PC-9 (cell line): ENCODE measurements at regions of chr6 and their contacts with region 1.

Region 1: DNA sequence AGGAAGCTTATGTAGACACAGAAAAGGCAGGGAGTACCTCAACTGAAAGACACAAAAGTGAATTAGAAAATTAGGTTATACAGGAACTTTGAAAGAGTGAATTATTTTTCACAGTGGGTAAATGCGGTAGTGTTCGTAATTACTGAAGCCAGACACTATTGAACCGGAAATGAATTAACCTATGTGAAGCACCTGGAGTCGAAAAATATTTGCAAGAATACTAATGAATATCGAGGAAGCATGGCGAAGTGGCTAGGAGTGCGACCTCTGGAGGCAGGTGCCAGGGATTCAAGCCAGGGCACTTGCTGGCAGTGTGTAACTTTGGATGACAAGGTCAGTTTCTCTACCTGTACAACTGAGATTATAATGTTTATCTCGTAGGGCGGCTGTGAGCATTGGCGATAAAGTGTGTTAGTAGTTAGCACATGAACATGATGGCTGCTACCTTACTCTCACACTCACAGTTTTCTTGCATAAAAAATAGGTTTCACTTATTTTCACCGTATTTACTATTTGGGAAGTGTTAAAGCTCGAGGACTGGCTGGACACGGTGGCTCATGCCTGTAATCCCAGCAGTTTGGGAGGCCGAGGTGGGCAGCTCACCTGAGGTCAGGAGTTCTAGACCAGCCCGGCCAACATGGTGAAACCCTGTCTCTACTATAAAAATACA is 567 bp upstream of the SLC18B1 start:
- DNase-seq: peak; percentile 78 to 85
- H3K4me3 ChIP-seq: no peak overlapping the region; the same call in 1 of the 2 replicates
- H3K27ac ChIP-seq: no peak overlapping the region
- H3K4me1 ChIP-seq: peaks cover 7% of the 10 kb centered on the region
- H3K27me3 ChIP-seq: no peaks in the 10 kb centered on the region
- CTCF ChIP-seq: peak; percentile 91

Region 2: DNA sequence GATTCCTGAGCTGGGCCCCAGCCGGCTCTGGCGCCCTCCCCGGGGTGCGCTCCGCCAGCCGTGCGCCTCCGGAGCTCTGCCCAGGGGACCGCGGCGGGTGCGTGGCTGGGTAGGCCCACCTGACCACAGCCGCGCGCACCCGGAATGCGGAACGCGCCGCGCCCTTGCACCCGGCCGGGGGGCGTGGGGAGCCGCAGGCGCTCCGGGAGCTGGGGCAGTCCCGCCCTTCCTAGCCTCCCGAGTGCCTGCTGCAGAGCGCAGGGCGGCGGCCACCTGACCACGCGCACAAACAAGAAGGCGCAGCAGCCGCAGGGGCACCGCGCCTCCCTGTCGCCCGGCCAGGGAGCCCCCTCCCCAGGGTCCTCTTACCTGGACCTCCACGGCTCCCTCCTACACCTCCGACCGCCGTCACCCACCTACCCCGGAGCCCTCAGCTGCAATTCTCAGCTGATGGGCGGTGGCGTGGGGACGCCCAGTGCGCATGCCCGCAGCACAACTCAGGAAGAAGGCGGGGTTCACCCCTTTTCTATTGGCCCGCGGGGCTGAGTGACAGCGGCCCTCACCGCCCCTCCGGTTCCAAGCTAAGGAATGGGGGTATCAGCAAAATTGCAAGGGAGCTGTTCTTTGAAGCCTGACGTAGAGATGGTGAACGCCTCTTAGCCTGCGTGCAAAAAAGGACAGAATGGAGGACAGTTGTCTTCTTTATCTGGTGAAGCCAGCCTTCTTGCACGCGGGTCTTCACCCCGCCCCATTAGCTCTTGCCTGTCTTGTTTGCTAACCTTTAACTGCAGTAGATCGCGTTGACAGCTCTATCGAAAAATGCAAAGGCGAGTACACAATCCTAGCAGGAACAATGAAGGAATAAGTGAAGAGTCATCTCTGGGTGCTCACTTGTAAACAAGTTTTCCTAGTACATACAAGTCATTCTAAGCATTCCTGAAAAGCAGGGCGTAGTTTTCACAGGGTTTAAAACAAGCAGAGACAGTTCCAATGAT is 286.1 kb before region 1 on chr6 and contains the start of gene STX7:
- CTCF ChIA-PET with region 1: no interaction called
- POLR2A ChIA-PET with region 1: no interaction called
- intact Hi-C with region 1: loop called (anchors 5 kb)
- DNase-seq: peak; percentile 90 to 97
- H3K4me3 ChIP-seq: peak within 1 kb of the TSS; percentile 71
- H3K27ac ChIP-seq: peak within 1 kb of the TSS; percentile 63
- H3K4me1 ChIP-seq: peaks cover 28% of the 10 kb centered on the region
- H3K27me3 ChIP-seq: no peaks in the 10 kb centered on the region
- CTCF ChIP-seq: no peak
- total RNA-seq, gene STX7: 33.3 and 40.7 TPM in 2 replicates

Region 3: DNA sequence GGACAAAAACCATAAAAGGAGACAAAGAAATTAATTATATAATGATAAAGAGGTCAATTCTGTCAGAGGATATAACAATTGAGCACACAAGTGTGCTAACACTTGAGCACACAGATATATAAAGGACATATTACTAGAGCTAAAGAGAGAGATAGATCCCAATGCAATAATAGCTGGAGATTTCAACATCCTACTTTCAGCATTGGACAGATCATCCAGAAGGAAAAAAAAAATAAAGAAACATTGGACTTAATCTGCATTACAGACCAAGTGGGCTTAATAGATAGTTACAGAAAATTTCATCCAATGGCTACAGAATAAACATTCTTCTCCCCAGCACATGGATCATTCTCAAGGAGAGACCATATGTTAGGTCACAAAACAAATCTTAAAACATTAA is 95.1 kb before region 1 on chr6:
- CTCF ChIA-PET with region 1: interaction called, 12 read pairs
- POLR2A ChIA-PET with region 1: no interaction called
- intact Hi-C with region 1: no loop called
- DNase-seq: no peak
- H3K4me3 ChIP-seq: no peak overlapping the region
- H3K27ac ChIP-seq: no peak overlapping the region
- H3K4me1 ChIP-seq: no peaks in the 10 kb centered on the region
- H3K27me3 ChIP-seq: no peaks in the 10 kb centered on the region
- CTCF ChIP-seq: no peak

Region 4: GRCh38 chr6:132813173-132813856 is 14.3 kb after region 1 on chr6:
- CTCF ChIA-PET with region 1: interaction called, 13 read pairs
- POLR2A ChIA-PET with region 1: no interaction called
- intact Hi-C with region 1: loop called (anchors 1 kb)
- DNase-seq: peak in 1 of 2 experiments; percentile 59
- H3K4me3 ChIP-seq: peak overlapping the region; percentile 84
- H3K27ac ChIP-seq: peak overlapping the region; percentile 89
- H3K4me1 ChIP-seq: peaks cover 36% of the 10 kb centered on the region
- H3K27me3 ChIP-seq: no peaks in the 10 kb centered on the region
- CTCF ChIP-seq: no peak